Sciatic nerve (tissue), 2 donors: ENCODE measurements at regions of chr6 and their contacts with region 1.

Region 1: DNA sequence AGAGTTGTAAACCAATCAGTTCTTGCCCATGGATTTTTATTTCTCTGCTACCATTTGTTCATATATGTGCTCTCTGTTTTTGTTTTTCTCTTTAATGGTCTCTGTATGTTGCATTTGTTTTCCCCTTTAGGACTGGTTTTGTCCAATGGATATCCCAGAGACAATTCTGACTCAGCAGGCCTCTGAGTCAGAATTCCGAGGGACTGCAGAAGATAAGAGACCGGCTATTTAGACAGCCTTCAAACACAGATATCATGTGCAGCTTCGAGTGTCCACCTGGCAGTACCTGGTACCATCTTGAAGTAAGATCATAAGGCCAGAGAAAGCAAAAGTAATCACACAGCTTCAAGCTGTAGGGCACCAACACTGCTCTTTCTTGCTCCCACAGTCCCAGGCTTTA is 125.5 kb downstream of the ELOVL4 start:
- DNase-seq: no peak
- ATAC-seq: no peak

Region 2: DNA sequence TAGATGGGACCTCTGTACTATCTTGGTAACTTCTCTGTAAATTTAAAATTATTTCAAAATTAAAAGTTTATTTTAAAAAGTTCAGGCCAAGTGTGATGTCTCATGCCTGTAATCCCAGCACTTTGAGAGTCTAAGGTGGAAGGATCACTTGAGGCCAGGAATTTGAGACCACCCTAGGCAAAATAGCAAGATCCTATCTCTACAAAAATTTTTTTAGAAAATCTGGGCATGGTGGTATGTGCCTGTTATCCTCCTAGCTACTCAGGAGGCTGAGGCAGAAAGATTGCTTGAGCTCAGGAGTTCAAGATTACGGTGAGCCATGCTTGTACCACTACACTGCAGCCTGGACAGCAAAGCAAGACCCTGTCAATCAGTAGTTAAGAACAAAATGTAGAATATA is 939.0 kb before region 1 on chr6:
- intact Hi-C with region 1: no loop called
- DNase-seq: no peak
- ATAC-seq: no peak

Region 3: DNA sequence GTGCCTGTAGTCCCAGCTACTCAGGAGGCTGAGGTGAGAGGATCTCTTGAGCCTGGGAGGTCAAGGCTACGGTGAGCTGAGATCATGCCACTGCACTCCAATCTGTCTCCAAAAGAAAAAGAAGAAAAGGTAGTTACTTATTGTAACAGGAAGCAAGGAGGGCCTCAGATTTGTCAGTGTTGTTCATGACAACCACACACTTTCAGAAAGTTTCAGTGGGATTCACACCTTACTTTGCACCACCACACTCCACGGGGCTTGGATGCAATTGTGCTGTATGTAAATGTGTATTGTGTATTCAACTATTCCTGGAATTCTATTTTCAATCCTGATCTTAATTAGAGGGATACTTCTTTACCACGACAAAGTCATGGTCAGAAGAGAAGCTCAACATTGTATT is 17.1 kb before region 1 on chr6:
- intact Hi-C with region 1: loop called (anchors 1 kb)
- DNase-seq: no peak
- ATAC-seq: no peak